Spleen (tissue), 13 donors: ENCODE measurements at regions of chr6 and their contacts with region 1.

Region 1: DNA sequence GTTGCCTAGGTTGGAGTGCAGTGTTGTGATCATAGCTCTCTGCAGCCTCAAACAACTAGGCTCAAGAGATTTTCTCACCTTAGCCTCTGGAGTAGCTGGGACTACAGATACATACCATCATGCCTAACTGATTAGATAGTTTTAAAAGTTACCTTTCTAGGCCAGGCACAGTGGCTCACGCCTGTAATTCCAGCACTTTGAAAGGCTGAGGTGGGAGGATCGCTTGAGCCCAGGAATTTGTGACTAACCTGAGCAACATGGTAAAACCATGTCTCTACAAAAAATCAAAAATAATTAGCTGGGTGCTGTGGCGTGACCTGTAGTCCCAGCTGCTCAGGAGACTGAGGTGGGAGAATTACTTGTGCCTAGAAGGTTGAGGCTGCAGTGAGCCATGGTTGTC is 41.2 kb downstream of the SLC17A5 start:
- DNase-seq: no peak
- H3K4me3 ChIP-seq: no peak overlapping the region
- H3K27ac ChIP-seq: no peak overlapping the region
- H3K4me1 ChIP-seq: peaks cover 0 to 12% (median 6%) of the 10 kb centered on the region in 6 donors
- H3K27me3 ChIP-seq: no peaks in the 10 kb centered on the region
- CTCF ChIP-seq: no peak
- POLR2A ChIP-seq: no peak

Region 2: GRCh38 chr6:73515204-73515655 is 97.4 kb before region 1 on chr6:
- intact Hi-C with region 1: loop called (anchors 2 kb)
- DNase-seq: no peak
- H3K4me3 ChIP-seq: peak overlapping the region in 1 of 8 donors; percentile 28
- H3K27ac ChIP-seq: peak overlapping the region in 7 of 8 donors; percentile 15 to 69 (median 58)
- H3K4me1 ChIP-seq: peaks cover 33 to 91% (median 53%) of the 10 kb centered on the region in 6 donors
- H3K27me3 ChIP-seq: no peaks in the 10 kb centered on the region
- CTCF ChIP-seq: no peak
- POLR2A ChIP-seq: no peak

Region 3: DNA sequence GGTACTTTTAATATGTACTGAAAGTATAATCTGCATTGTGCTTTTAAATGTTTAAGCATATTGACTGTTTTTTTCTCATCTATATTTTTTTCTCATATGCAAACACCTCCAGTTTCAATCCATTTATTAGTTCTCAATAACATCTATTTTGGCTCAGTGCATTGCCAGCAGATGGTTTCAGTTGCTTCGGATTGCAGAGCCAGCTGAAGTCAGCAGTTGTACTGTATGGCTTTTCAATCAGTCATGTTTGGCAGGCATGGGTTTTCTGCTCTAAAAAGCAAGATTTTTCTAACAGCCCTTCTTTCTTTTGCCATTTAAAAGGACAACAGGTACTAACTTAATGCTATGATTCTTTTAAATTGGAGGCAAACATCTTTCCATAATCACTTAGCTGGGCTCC is 204.6 kb after region 1 on chr6:
- intact Hi-C with region 1: no loop called
- DNase-seq: no peak
- H3K4me3 ChIP-seq: no peak overlapping the region
- H3K27ac ChIP-seq: no peak overlapping the region
- H3K4me1 ChIP-seq: no peaks in the 10 kb centered on the region
- H3K27me3 ChIP-seq: no peaks in the 10 kb centered on the region
- CTCF ChIP-seq: no peak
- POLR2A ChIP-seq: no peak